Heart right ventricle (tissue), 16 donors: ENCODE measurements at regions of chr1 and their contacts with region 1.

Region 1: GRCh38 chr1:89429062-89429461 is 65.2 kb downstream of the GBP6 start:
- DNase-seq: no peak
- ATAC-seq: peak in 1 of 8 donors; percentile 16
- H3K4me3 ChIP-seq: no peak overlapping the region
- H3K27ac ChIP-seq: no peak overlapping the region
- H3K4me1 ChIP-seq: peaks cover 0 to 5% (median 0%) of the 10 kb centered on the region in 9 donors
- H3K27me3 ChIP-seq: no peaks in the 10 kb centered on the region
- CTCF ChIP-seq: no peak

Region 2: GRCh38 chr1:89065079-89065868 is 363.8 kb before region 1 on chr1 and contains the start of gene GBP1:
- intact Hi-C with region 1: no loop called
- DNase-seq: peak in 1 of 2 donors; percentile 57
- ATAC-seq: peak in 7 of 8 donors; percentile 89 to 95 (median 92)
- H3K4me3 ChIP-seq: peak within 1 kb of the TSS; percentile 1 to 70 (median 59)
- H3K27ac ChIP-seq: peak within 1 kb of the TSS; percentile 61 to 92 (median 86)
- H3K4me1 ChIP-seq: peaks cover 2 to 57% (median 19%) of the 10 kb centered on the region in 9 donors
- H3K27me3 ChIP-seq: no peaks in the 10 kb centered on the region
- CTCF ChIP-seq: no peak
- total RNA-seq, gene GBP1: 4.1 to 119 (median 9.0) TPM

Region 3: GRCh38 chr1:89566761-89567174 is 137.7 kb after region 1 on chr1:
- intact Hi-C with region 1: no loop called
- DNase-seq: peak; percentile 49 to 56
- ATAC-seq: peak; percentile 59 to 96 (median 94)
- H3K4me3 ChIP-seq: peak overlapping the region in 5 of 10 donors; percentile 0 to 24 (median 20)
- H3K27ac ChIP-seq: peak overlapping the region; percentile 17 to 81 (median 64)
- H3K4me1 ChIP-seq: peaks cover 0 to 48% (median 6%) of the 10 kb centered on the region in 9 donors
- H3K27me3 ChIP-seq: no peaks in the 10 kb centered on the region
- CTCF ChIP-seq: no peak

Region 4: GRCh38 chr1:89681045-89681729 is 252.1 kb after region 1 on chr1:
- intact Hi-C with region 1: no loop called
- DNase-seq: no peak
- ATAC-seq: no peak
- H3K4me3 ChIP-seq: no peak overlapping the region
- H3K27ac ChIP-seq: no peak overlapping the region
- H3K4me1 ChIP-seq: peaks cover 0 to 18% (median 0%) of the 10 kb centered on the region in 9 donors
- H3K27me3 ChIP-seq: no peaks in the 10 kb centered on the region
- CTCF ChIP-seq: no peak

Region 5: DNA sequence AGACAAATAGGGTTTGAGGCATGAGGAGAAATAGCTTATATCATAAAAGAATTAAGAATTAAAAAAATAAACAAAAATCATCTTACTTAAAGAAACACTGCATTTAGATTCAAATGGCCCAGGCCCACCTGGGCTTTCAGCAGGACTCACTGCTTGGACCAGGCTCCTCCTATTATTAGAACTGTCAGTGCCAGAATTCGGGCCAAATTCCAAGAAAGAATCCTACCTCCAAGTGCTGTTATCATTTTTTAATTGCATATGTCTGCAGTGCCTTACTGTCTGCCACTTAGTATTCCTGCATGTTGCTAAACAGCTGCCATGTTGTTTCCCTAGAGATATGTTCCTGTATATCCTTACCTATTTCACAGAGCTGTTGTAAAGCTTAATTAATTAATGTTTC is 1176.0 kb after region 1 on chr1:
- intact Hi-C with region 1: loop called in 1 of 10 experiments (anchors 10 kb)
- DNase-seq: no peak
- ATAC-seq: no peak
- H3K4me3 ChIP-seq: no peak overlapping the region
- H3K27ac ChIP-seq: no peak overlapping the region
- H3K4me1 ChIP-seq: no peaks in the 10 kb centered on the region
- H3K27me3 ChIP-seq: no peaks in the 10 kb centered on the region
- CTCF ChIP-seq: no peak